Common myeloid progenitor, CD34-positive (primary cell): ENCODE measurements at regions of chr18 and their contacts with region 1.

Region 1: DNA sequence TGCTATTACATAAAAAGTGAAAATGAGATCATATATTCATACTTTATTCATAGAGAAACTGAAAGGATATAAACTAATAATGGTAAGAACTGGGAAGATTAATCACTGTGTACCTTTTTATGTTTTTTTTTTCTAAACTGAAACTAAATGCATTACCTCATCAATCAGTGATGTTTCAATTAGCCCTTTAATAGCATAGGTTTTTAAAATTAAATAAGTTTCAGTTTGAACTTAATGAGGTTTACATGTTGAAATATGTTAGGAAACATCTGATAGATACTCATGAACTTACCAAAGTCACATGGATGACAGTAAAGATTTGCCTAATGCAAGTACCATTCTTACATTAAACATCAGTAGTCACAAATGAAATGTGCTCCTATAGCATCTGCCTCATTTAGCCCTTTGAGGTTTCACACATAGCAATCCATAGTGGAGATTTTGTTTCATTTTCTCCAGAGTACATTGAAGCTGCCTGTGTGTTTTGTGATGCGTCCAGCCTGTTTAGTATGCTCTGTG is 8.9 kb downstream of the MAPRE2 start:
- DNase-seq: peak in 2 of 3 donors; percentile 35 to 53
- H3K4me3 ChIP-seq: peak overlapping the region in 5 of 7 experiments; percentile 12 to 63 (median 43)
- H3K27ac ChIP-seq: peak overlapping the region; percentile 1 to 54
- H3K4me1 ChIP-seq: peaks cover 41 to 57% (median 55%) of the 10 kb centered on the region in 4 experiments
- H3K27me3 ChIP-seq: no peaks in the 10 kb centered on the region

Region 2: GRCh38 chr18:35060122-35060815 is 10.2 kb after region 1 on chr18:
- CTCF ChIA-PET with region 1: interaction called, 19 read pairs
- POLR2A ChIA-PET with region 1: interaction called, 3 read pairs
- DNase-seq: no peak
- H3K4me3 ChIP-seq: no peak overlapping the region
- H3K27ac ChIP-seq: no peak overlapping the region
- H3K4me1 ChIP-seq: peaks cover 0 to 2% (median 0%) of the 10 kb centered on the region in 4 experiments
- H3K27me3 ChIP-seq: no peaks in the 10 kb centered on the region